ENCODE measurements at regions of chr2 and their contacts with region 1.

Region 1: GRCh38 chr2:141399270-141399669 is 731.5 kb downstream of the LRP1B start:
- DNase-seq: peak; percentile 57
- ATAC-seq: no peak
- H3K4me3 ChIP-seq: no peak overlapping the region
- H3K27ac ChIP-seq: no peak overlapping the region
- H3K4me1 ChIP-seq: no peaks in the 10 kb centered on the region
- H3K27me3 ChIP-seq: no peaks in the 10 kb centered on the region
- CTCF ChIP-seq: peak; percentile 82

Region 2: GRCh38 chr2:140988597-140988996 is 410.7 kb before region 1 on chr2:
- CTCF ChIA-PET with region 1: no interaction called
- POLR2A ChIA-PET with region 1: no interaction called
- intact Hi-C with region 1: loop called (anchors 10 kb)
- DNase-seq: peak; percentile 6
- ATAC-seq: no peak
- H3K4me3 ChIP-seq: no peak overlapping the region
- H3K27ac ChIP-seq: no peak overlapping the region
- H3K4me1 ChIP-seq: 0 out of 2 replicates have a peak, but pooled peaks cover 6% of the 10 kb centered on the region
- H3K27me3 ChIP-seq: no peaks in the 10 kb centered on the region
- CTCF ChIP-seq: no peak

Region 3: DNA sequence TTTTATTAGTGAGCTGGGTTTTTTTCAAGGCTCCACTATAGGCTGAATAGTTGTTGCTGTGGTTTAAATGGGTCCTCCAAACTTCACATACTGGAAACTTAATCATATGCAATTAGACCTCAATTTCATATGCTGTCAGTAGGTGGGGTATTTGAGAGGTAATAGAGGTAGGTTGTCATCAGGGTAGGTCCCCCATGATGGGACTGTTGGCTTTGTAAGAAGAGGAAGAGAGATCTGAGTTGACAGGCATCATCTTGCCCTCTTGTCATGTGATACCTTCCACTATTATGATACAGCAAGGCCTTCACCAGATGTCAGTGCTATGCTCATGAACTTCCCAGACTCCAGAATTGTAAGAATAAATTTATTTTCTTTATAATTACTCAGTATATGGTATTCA is 87.8 kb before region 1 on chr2:
- CTCF ChIA-PET with region 1: no interaction called
- POLR2A ChIA-PET with region 1: no interaction called
- intact Hi-C with region 1: no loop called
- DNase-seq: no peak
- ATAC-seq: no peak
- H3K4me3 ChIP-seq: no peak overlapping the region
- H3K27ac ChIP-seq: no peak overlapping the region
- H3K4me1 ChIP-seq: no peaks in the 10 kb centered on the region
- H3K27me3 ChIP-seq: no peaks in the 10 kb centered on the region
- CTCF ChIP-seq: no peak; the same call in 1 of the 2 replicates

Region 4: DNA sequence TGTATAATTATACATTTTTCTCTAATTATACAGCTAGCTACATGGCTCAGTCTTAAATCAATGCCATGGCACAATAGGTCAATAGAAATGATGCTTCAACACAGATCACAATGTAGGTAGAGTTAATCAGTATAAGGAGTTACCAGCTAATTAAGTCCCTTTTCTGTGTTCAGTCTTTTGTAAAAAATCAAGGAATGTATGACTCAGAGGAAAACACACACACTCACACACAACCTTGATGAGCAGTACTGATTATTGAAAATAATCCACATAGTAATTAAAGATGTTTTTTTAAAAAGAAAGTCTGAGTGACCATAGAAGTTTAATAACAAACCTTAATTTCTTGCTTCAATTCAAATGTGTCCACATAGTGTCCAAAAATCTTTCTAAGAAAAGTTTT is 40.3 kb after region 1 on chr2:
- CTCF ChIA-PET with region 1: no interaction called
- POLR2A ChIA-PET with region 1: no interaction called
- intact Hi-C with region 1: no loop called
- DNase-seq: peak; percentile 8
- ATAC-seq: no peak
- H3K4me3 ChIP-seq: no peak overlapping the region
- H3K27ac ChIP-seq: no peak overlapping the region
- H3K4me1 ChIP-seq: no peaks in the 10 kb centered on the region
- H3K27me3 ChIP-seq: no peaks in the 10 kb centered on the region
- CTCF ChIP-seq: no peak

Region 5: DNA sequence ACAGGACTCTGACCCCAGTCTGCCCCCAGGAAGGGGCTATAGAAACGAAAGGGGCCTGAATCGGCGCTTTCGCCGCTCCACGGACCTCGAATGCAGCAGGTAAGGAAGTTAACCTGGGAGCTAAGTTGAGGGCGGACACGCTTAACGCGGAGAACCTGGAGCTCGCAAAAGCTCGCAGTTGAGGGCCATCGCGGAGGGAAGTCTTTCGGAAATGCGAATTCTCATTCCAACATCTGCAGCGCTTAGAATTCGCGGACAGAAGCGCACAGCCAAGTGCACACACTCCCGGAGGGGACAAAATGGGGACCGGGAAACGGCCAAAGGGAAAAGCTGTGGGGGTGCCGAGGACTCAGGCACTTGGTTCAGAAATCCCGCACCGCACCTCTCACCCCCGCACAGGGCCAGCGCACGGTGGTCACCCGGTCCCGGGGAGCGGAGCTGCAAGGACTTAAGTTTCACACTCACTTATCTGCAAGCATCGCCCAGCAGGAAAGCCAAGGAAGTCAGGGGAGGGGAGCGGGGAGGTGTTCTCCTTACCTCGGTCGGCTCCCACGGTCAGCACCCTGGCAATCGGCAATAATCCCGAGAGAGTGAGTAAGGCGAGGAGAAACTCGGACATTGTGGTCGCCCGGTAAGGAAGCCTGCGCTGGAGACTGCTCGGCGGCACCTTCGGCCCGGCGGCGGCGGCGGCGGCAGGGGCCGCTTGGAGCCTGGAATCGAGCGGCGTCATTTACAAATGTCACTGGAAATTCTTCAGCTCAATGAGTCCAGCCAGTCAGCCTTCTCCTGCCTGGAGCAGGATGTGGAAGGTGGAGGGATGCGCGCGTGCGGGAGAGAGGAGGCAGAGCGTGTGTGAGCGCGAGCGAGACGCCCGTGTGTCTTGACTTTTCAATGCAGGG is 731.1 kb after region 1 on chr2:
- CTCF ChIA-PET with region 1: no interaction called
- POLR2A ChIA-PET with region 1: no interaction called
- intact Hi-C with region 1: loop called (anchors 10 kb)
- DNase-seq: peak; percentile 30
- ATAC-seq: peak; percentile 63
- H3K4me3 ChIP-seq: peak overlapping the region; percentile 60
- H3K27ac ChIP-seq: no peak overlapping the region
- H3K4me1 ChIP-seq: no peaks in the 10 kb centered on the region
- H3K27me3 ChIP-seq: peaks cover 17% of the 10 kb centered on the region
- CTCF ChIP-seq: no peak